HCT116 (cell line): ENCODE measurements at regions of chr12 and their contacts with region 1.

Region 1: DNA sequence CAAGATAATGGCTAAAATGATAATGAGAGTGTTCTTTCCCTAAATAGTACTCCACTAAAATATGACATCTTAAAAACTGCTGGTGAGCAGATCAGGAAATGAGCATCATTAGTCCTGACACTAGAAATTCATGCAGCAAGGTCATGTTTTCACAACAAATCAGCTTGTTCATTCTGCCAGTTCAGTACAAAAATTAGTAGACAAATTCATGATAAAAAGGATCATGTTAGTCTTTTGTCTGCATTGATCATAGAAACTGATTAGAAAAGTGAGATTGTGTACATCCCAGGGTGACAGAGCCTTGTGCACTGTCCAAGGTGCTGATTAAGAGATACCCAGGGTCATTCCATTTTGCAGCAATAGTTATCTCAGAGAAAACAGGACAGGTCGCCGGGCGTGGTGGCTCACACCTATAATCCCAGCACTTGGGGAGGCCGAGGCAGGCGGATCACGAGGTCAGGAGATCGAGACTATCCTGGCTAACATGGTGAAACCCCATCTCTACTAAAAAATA is 163.6 kb downstream of the RIMBP2 start:
- DNase-seq: no peak
- ATAC-seq: no peak
- H3K4me3 ChIP-seq: no peak overlapping the region
- H3K27ac ChIP-seq: no peak overlapping the region
- H3K4me1 ChIP-seq: no peaks in the 10 kb centered on the region
- H3K27me3 ChIP-seq: peaks cover 3% of the 10 kb centered on the region
- CTCF ChIP-seq: no peak
- POLR2A ChIP-seq: no peak
- RAD21 ChIP-seq: no peak

Region 2: GRCh38 chr12:130526813-130527212 is 25.7 kb before region 1 on chr12:
- CTCF ChIA-PET with region 1: no interaction called
- POLR2A ChIA-PET with region 1: no interaction called
- RAD21 ChIA-PET with region 1: no interaction called
- intact Hi-C with region 1: loop called (anchors 2 kb)
- DNase-seq: no peak
- ATAC-seq: no peak
- H3K4me3 ChIP-seq: no peak overlapping the region
- H3K27ac ChIP-seq: no peak overlapping the region
- H3K4me1 ChIP-seq: no peaks in the 10 kb centered on the region
- H3K27me3 ChIP-seq: peaks cover 4% of the 10 kb centered on the region; the same call in 1 of the 2 replicates
- CTCF ChIP-seq: no peak
- POLR2A ChIP-seq: no peak
- RAD21 ChIP-seq: no peak

Region 3: GRCh38 chr12:130571089-130571488 is 18.5 kb after region 1 on chr12:
- CTCF ChIA-PET with region 1: no interaction called
- POLR2A ChIA-PET with region 1: no interaction called
- RAD21 ChIA-PET with region 1: no interaction called
- intact Hi-C with region 1: no loop called
- DNase-seq: no peak
- ATAC-seq: no peak
- H3K4me3 ChIP-seq: no peak overlapping the region
- H3K27ac ChIP-seq: no peak overlapping the region
- H3K4me1 ChIP-seq: no peaks in the 10 kb centered on the region
- H3K27me3 ChIP-seq: no peaks in the 10 kb centered on the region
- CTCF ChIP-seq: no peak
- POLR2A ChIP-seq: no peak
- RAD21 ChIP-seq: no peak